Calu3 (cell line): ENCODE measurements at regions of chr1 and their contacts with region 1.

Region 1: GRCh38 chr1:18913065-18913835 is 10.9 kb upstream of the ALDH4A1 start:
- DNase-seq: peak; percentile 82
- H3K4me3 Mint-ChIP-seq: no peak overlapping the region
- H3K27ac Mint-ChIP-seq: no peak overlapping the region
- H3K4me1 Mint-ChIP-seq: no peaks in the 10 kb centered on the region
- H3K27me3 Mint-ChIP-seq: no peaks in the 10 kb centered on the region
- CTCF ChIP-seq: peak; percentile 91

Region 2: DNA sequence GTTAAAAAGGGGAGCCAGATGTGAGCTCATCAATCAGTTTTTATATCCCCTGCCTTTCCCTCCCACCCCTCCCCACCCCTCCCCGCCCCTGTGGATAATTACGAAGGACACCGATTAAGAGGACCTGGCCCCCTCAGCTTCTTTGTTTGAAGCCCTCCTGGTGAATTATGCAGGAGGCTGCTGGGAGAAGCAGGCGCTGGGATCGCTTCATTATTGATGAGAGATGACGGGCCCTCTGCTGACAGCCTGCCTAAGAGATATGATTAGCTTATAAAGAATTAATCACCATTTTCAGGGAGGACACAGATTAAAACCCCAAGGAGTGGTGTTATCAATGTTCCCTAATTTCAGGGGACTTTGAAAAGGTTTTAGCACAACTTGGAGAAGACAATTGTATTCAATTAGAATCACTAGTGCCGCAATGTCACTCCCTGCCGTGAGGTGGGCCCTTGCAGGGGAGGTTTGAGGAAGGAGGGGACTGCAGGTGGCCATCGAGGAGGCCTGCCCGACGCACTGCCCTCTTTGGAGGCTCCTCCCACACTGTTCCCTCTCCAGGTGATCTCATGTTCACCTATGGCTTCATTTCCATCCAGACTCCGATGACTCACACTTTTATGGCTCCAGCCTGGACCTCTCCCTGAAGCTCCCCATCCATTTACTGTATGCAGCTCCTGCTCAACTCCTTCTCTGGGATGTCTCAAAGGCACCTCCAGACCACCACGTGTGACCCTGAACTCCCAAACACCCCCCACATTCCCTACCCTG is 499.5 kb before region 1 on chr1:
- CTCF ChIA-PET with region 1: no interaction called
- intact Hi-C with region 1: no loop called
- DNase-seq: no peak
- H3K4me3 Mint-ChIP-seq: no peak overlapping the region
- H3K27ac Mint-ChIP-seq: no peak overlapping the region
- H3K4me1 Mint-ChIP-seq: peaks cover 14% of the 10 kb centered on the region
- H3K27me3 Mint-ChIP-seq: peaks cover 29% of the 10 kb centered on the region
- CTCF ChIP-seq: no peak

Region 3: GRCh38 chr1:18932387-18932786 is 19.1 kb after region 1 on chr1:
- CTCF ChIA-PET with region 1: interaction called, 10 read pairs
- intact Hi-C with region 1: no loop called
- DNase-seq: peak; percentile 37
- H3K4me3 Mint-ChIP-seq: no peak overlapping the region
- H3K27ac Mint-ChIP-seq: no peak overlapping the region
- H3K4me1 Mint-ChIP-seq: peaks cover 15% of the 10 kb centered on the region
- H3K27me3 Mint-ChIP-seq: no peaks in the 10 kb centered on the region
- CTCF ChIP-seq: no peak

Region 4: DNA sequence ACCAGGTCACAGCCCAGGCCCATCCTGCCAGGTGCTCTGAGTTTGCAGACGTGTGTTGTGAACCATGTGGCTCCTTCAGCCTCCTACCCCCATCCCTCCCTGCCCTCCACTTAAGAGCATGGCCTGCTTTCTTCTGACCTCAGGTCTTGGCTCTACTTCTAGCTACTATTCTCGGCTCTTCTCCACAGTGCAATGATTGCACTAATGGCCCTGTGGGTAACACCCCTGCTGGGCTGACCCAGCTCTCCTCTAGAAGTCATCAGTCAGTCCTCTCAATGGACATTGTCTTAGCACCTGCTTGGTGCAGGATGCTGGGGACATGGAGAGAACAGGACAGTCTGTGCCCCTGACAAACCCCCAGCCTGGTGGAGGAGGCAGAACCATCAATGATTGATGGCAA is 65.5 kb after region 1 on chr1:
- CTCF ChIA-PET with region 1: no interaction called
- intact Hi-C with region 1: no loop called
- DNase-seq: no peak
- H3K4me3 Mint-ChIP-seq: no peak overlapping the region
- H3K27ac Mint-ChIP-seq: no peak overlapping the region
- H3K4me1 Mint-ChIP-seq: no peaks in the 10 kb centered on the region
- H3K27me3 Mint-ChIP-seq: peaks cover 18% of the 10 kb centered on the region
- CTCF ChIP-seq: no peak